ENCODE measurements at regions of chr6 and their contacts with region 1.

Region 1: GRCh38 chr6:21593412-21593926 is at the start of gene SOX4:
- DNase-seq: peak; percentile 94
- ATAC-seq: peak; percentile 88
- H3K4me3 Mint-ChIP-seq: peak within 1 kb of the TSS; percentile 14; the same call in 1 of the 2 replicates
- H3K27ac Mint-ChIP-seq: peak within 1 kb of the TSS; percentile 96
- H3K4me1 Mint-ChIP-seq: peaks cover 15% of the 10 kb centered on the region
- H3K27me3 Mint-ChIP-seq: no peaks in the 10 kb centered on the region; the same call in 1 of the 2 replicates
- CTCF ChIP-seq: no peak
- total RNA-seq, gene SOX4: 167 to 182 TPM (median 169 TPM) in 3 replicates

Region 2: DNA sequence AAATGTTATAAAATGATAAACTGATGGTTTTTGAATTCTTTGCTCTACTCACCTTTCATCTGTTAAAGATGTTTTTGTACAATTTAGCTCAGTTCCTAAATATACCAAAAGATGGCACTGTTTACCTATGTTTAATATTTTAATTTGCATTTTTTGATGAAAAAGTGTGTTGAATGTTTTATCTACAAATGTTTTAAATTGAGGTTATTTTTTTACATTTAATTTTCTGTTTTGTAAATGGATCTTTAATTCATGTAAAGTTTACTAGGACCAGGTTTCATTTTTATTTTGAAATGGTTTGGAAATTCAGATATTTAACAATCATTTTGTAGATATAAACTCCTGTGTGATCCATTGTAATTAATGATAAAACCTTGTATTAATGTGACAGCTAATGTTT is 1029.2 kb before region 1 on chr6:
- CTCF ChIA-PET with region 1: interaction called, 19 read pairs
- POLR2A ChIA-PET with region 1: interaction called, 3 read pairs
- DNase-seq: no peak
- ATAC-seq: no peak
- H3K4me3 Mint-ChIP-seq: no peak overlapping the region
- H3K27ac Mint-ChIP-seq: no peak overlapping the region
- H3K4me1 Mint-ChIP-seq: peaks cover 28% of the 10 kb centered on the region
- H3K27me3 Mint-ChIP-seq: no peaks in the 10 kb centered on the region
- CTCF ChIP-seq: peak; percentile 51; the same call in 1 of the 2 replicates

Region 3: GRCh38 chr6:21098134-21098533 is 495.3 kb before region 1 on chr6:
- CTCF ChIA-PET with region 1: no interaction called
- POLR2A ChIA-PET with region 1: interaction called, 12 read pairs
- DNase-seq: no peak
- ATAC-seq: no peak
- H3K4me3 Mint-ChIP-seq: no peak overlapping the region
- H3K27ac Mint-ChIP-seq: peak overlapping the region; percentile 61
- H3K4me1 Mint-ChIP-seq: peaks cover 53% of the 10 kb centered on the region
- H3K27me3 Mint-ChIP-seq: no peaks in the 10 kb centered on the region
- CTCF ChIP-seq: no peak

Region 4: DNA sequence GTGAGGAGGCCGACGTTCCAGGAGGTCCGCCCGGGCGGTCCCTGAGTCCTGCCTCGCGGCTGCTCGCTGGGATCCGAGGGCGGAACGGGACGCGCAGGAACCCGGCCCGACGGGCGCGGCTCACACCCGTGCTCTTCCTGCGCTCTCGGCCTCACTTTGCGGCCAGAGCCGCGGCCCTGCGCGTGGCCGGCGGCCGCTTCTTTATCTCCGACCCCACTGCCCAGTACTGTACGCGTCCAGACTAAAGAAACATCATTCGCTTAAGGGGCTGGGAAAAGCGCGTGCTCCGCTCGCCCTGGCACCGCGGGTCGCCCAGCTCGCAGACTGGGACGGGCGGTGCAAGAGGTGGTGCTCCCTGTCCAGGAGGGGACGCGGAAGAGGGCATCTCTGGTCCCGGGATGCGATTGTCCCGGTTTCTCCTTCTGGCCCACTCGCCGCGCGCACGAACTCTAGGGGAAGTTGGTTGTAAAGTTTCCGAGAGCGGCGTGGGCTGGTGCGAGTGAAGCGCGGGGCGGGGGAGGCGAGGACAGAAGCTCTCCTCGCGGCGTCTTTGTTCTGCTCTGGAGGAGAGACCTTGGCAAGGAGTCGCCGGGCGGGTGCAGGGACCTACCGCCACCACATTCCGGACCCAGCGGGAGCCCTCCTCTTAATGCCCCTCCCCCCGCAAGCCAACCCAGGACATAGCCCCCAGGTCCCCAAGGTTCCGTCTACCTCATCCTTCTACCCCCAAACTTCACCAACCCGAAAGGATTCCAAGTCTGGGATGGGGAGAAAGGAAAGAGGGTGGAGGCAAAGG is 71.0 kb after region 1 on chr6:
- CTCF ChIA-PET with region 1: interaction called, 9 read pairs
- POLR2A ChIA-PET with region 1: interaction called, 81 read pairs
- DNase-seq: peak; percentile 78
- ATAC-seq: peak; percentile 20
- H3K4me3 Mint-ChIP-seq: peak overlapping the region; percentile 87
- H3K27ac Mint-ChIP-seq: peak overlapping the region; percentile 99
- H3K4me1 Mint-ChIP-seq: peaks cover 36% of the 10 kb centered on the region
- H3K27me3 Mint-ChIP-seq: peaks cover 15% of the 10 kb centered on the region
- CTCF ChIP-seq: no peak

Region 5: GRCh38 chr6:21748343-21749056 is 155.0 kb after region 1 on chr6:
- CTCF ChIA-PET with region 1: interaction called, 5 read pairs
- POLR2A ChIA-PET with region 1: interaction called, 25 read pairs
- DNase-seq: no peak
- ATAC-seq: peak; percentile 50
- H3K4me3 Mint-ChIP-seq: peak overlapping the region; percentile 39
- H3K27ac Mint-ChIP-seq: peak overlapping the region; percentile 92
- H3K4me1 Mint-ChIP-seq: peaks cover 81% of the 10 kb centered on the region
- H3K27me3 Mint-ChIP-seq: no peaks in the 10 kb centered on the region
- CTCF ChIP-seq: no peak